ENCODE measurements at regions of chr1 and their contacts with region 1.

Region 1: GRCh38 chr1:116737020-116737854 is 17.0 kb upstream of the CD2 start:
- DNase-seq: peak; percentile 7
- ATAC-seq: peak; percentile 69
- H3K4me3 ChIP-seq: no peak overlapping the region
- H3K27ac ChIP-seq: no peak overlapping the region
- H3K4me1 ChIP-seq: no peaks in the 10 kb centered on the region
- H3K27me3 ChIP-seq: no peaks in the 10 kb centered on the region
- CTCF ChIP-seq: peak; percentile 79
- EP300 ChIP-seq: no peak
- POLR2A ChIP-seq: no peak
- RAD21 ChIP-seq: peak; percentile 67

Region 2: GRCh38 chr1:116654355-116654754 is 82.9 kb before region 1 on chr1:
- CTCF ChIA-PET with region 1: no interaction called
- POLR2A ChIA-PET with region 1: no interaction called
- in situ Hi-C with region 1: no loop called
- intact Hi-C with region 1: no loop called
- DNase-seq: no peak
- ATAC-seq: no peak
- H3K4me3 ChIP-seq: no peak overlapping the region
- H3K27ac ChIP-seq: no peak overlapping the region
- H3K4me1 ChIP-seq: no peaks in the 10 kb centered on the region
- H3K27me3 ChIP-seq: no peaks in the 10 kb centered on the region
- CTCF ChIP-seq: no peak
- EP300 ChIP-seq: no peak
- POLR2A ChIP-seq: no peak
- RAD21 ChIP-seq: no peak

Region 3: GRCh38 chr1:116679091-116679827 is 58.0 kb before region 1 on chr1:
- CTCF ChIA-PET with region 1: no interaction called
- POLR2A ChIA-PET with region 1: no interaction called
- in situ Hi-C with region 1: no loop called
- intact Hi-C with region 1: no loop called
- DNase-seq: no peak
- ATAC-seq: no peak
- H3K4me3 ChIP-seq: no peak overlapping the region
- H3K27ac ChIP-seq: no peak overlapping the region
- H3K4me1 ChIP-seq: no peaks in the 10 kb centered on the region
- H3K27me3 ChIP-seq: no peaks in the 10 kb centered on the region; a peak in 1 of 5 replicates
- CTCF ChIP-seq: 0 out of 2 replicates have a peak, but pooled peaks have one; percentile 10
- EP300 ChIP-seq: no peak
- POLR2A ChIP-seq: no peak
- RAD21 ChIP-seq: no peak

Region 4: DNA sequence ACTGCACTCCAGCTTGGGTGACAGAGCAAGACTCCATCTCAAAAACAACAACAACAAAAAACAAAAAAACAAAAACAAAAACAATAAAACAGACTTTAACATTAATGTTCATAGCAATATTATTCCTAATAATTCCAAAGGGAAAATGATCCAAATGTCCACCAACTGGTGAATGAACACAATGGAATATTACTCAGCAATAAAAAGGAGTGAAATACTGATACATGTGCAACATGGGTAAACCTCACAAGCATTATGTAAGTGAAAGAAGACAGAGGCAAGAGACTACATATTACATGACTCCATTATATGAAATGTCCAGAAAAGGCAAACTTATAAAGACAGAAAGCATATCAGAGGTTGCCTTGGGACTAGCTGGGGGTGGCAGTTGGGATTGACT is 316.8 kb after region 1 on chr1:
- CTCF ChIA-PET with region 1: interaction called, 22 read pairs
- POLR2A ChIA-PET with region 1: no interaction called
- in situ Hi-C with region 1: loop called (anchors 5 kb)
- intact Hi-C with region 1: loop called (anchors 1 kb)
- DNase-seq: no peak
- ATAC-seq: no peak
- H3K4me3 ChIP-seq: no peak overlapping the region
- H3K27ac ChIP-seq: no peak overlapping the region
- H3K4me1 ChIP-seq: peaks cover 7% of the 10 kb centered on the region; the same call in 1 of the 2 replicates
- H3K27me3 ChIP-seq: no peaks in the 10 kb centered on the region
- CTCF ChIP-seq: no peak
- EP300 ChIP-seq: no peak
- POLR2A ChIP-seq: no peak
- RAD21 ChIP-seq: no peak